PC-9 (cell line): ENCODE measurements at regions of chr3 and their contacts with region 1.

Region 1: GRCh38 chr3:187112934-187113793 is 26.1 kb downstream of the RPL39L start:
- DNase-seq: no peak
- H3K4me3 ChIP-seq: no peak overlapping the region
- H3K27ac ChIP-seq: no peak overlapping the region
- H3K4me1 ChIP-seq: no peaks in the 10 kb centered on the region
- H3K27me3 ChIP-seq: no peaks in the 10 kb centered on the region
- CTCF ChIP-seq: peak; percentile 88

Region 2: GRCh38 chr3:186464424-186465093 is 648.6 kb before region 1 on chr3:
- CTCF ChIA-PET with region 1: interaction called, 10 read pairs
- POLR2A ChIA-PET with region 1: no interaction called
- intact Hi-C with region 1: no loop called
- DNase-seq: no peak
- H3K4me3 ChIP-seq: no peak overlapping the region
- H3K27ac ChIP-seq: no peak overlapping the region
- H3K4me1 ChIP-seq: no peaks in the 10 kb centered on the region
- H3K27me3 ChIP-seq: peaks cover 78% of the 10 kb centered on the region
- CTCF ChIP-seq: peak; percentile 37; the same call in 1 of the 2 replicates

Region 3: GRCh38 chr3:186640473-186640818 is 472.7 kb before region 1 on chr3:
- CTCF ChIA-PET with region 1: no interaction called
- POLR2A ChIA-PET with region 1: no interaction called
- intact Hi-C with region 1: no loop called
- DNase-seq: peak; percentile 67 to 70
- H3K4me3 ChIP-seq: no peak overlapping the region
- H3K27ac ChIP-seq: no peak overlapping the region
- H3K4me1 ChIP-seq: peaks cover 26% of the 10 kb centered on the region
- H3K27me3 ChIP-seq: no peaks in the 10 kb centered on the region
- CTCF ChIP-seq: no peak

Region 4: GRCh38 chr3:186849374-186849975 is 263.7 kb before region 1 on chr3:
- CTCF ChIA-PET with region 1: interaction called, 10 read pairs
- POLR2A ChIA-PET with region 1: no interaction called
- intact Hi-C with region 1: no loop called
- DNase-seq: peak in 1 of 2 experiments; percentile 52
- H3K4me3 ChIP-seq: no peak overlapping the region
- H3K27ac ChIP-seq: no peak overlapping the region
- H3K4me1 ChIP-seq: no peaks in the 10 kb centered on the region
- H3K27me3 ChIP-seq: 0 out of 2 replicates have a peak, but pooled peaks cover 7% of the 10 kb centered on the region
- CTCF ChIP-seq: peak; percentile 81

Region 5: DNA sequence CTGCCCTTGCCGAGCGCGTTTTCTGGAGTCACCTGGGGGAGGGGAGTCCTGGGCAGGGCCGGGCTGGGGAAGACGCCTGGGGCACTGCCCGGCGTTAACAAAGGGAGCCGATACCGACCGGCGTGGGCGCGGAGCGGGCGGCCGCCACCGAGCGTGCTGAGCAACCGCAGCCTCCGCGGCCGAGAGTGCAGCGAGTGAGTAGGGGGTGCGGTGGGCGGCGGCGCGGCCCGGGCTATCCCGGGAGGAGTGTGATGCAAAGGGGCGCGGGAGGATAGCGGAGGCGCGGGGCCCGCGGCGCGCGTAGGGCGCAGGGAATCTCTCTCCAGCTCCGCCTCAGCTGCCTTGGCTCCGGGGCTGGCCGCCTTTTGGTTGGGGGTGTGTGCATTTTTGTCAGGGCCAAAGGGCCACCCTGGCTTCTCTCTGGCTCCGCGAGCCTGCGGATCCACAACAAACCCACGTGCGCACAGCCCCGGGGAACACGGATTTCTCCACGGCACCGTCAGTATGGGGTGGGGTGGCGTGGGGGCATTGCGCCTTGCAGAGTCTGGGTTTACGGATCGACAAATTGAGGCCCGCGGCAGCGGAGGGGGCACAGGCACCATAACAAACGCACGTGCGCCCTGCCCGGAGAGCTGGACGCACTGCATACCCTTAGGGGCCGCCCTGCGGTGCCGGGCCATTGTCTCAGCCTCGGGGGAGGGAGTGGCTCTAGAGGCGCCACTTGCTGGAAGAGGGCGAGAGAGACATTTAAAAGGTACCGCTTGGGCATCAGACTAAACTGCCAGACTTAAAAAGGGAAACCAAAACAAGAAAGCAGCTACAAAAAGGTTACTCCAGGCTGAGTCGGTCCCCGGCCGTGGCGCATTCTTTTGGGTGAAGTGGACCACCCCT is 182.3 kb before region 1 on chr3:
- CTCF ChIA-PET with region 1: no interaction called
- POLR2A ChIA-PET with region 1: no interaction called
- intact Hi-C with region 1: loop called (anchors 2 kb)
- DNase-seq: peak; percentile 65 to 71
- H3K4me3 ChIP-seq: peak overlapping the region; percentile 97
- H3K27ac ChIP-seq: no peak overlapping the region
- H3K4me1 ChIP-seq: peaks cover 12% of the 10 kb centered on the region
- H3K27me3 ChIP-seq: no peaks in the 10 kb centered on the region
- CTCF ChIP-seq: peak; percentile 29; the same call in 1 of the 2 replicates

Region 6: GRCh38 chr3:187227658-187228258 is 114.6 kb after region 1 on chr3:
- CTCF ChIA-PET with region 1: interaction called, 5 read pairs
- POLR2A ChIA-PET with region 1: no interaction called
- intact Hi-C with region 1: loop called (anchors 5 kb)
- DNase-seq: peak; percentile 58 to 78
- H3K4me3 ChIP-seq: no peak overlapping the region
- H3K27ac ChIP-seq: no peak overlapping the region
- H3K4me1 ChIP-seq: peaks cover 24% of the 10 kb centered on the region
- H3K27me3 ChIP-seq: peaks cover 34% of the 10 kb centered on the region
- CTCF ChIP-seq: no peak

Region 7: DNA sequence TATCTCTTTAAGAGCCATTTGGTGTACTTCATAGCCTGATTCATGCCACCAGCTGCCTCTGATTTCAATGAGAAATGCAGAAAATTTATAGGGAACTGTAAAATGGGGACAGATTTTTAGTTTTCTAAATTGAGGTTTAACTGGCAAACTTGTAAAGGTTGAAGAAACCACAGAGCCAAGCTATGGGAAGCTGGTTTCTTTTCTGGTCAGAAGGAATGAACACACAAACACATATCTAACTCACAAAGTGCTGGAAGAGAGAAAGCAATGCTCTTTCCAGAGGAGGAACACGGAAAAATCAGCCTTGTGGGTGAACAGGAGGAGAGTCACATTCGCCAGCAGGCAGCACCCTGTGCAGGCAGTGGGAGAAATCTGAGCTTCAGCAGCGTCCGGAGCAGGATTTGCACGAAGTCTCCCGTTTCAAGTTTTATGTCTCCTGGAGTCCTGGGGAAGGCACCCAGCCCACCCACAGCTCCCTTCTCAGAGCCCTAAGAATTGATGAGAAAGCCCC is 177.9 kb after region 1 on chr3:
- CTCF ChIA-PET with region 1: no interaction called
- POLR2A ChIA-PET with region 1: no interaction called
- intact Hi-C with region 1: loop called (anchors 5 kb)
- DNase-seq: peak in 1 of 2 experiments; percentile 11
- H3K4me3 ChIP-seq: no peak overlapping the region
- H3K27ac ChIP-seq: no peak overlapping the region
- H3K4me1 ChIP-seq: peaks cover 7% of the 10 kb centered on the region; the same call in 1 of the 2 replicates
- H3K27me3 ChIP-seq: no peaks in the 10 kb centered on the region
- CTCF ChIP-seq: no peak

Region 8: GRCh38 chr3:187319699-187320302 is 206.6 kb after region 1 on chr3:
- CTCF ChIA-PET with region 1: no interaction called
- POLR2A ChIA-PET with region 1: no interaction called
- intact Hi-C with region 1: loop called (anchors 2 kb)
- DNase-seq: peak; percentile 64 to 72
- H3K4me3 ChIP-seq: no peak overlapping the region
- H3K27ac ChIP-seq: no peak overlapping the region
- H3K4me1 ChIP-seq: no peaks in the 10 kb centered on the region
- H3K27me3 ChIP-seq: peaks cover 41% of the 10 kb centered on the region
- CTCF ChIP-seq: peak; percentile 85